ENCODE measurements at regions of chr22 and their contacts with region 1.

Region 1: GRCh38 chr22:37486224-37486845 is at the start of gene MFNG:
- DNase-seq: peak; percentile 26
- ATAC-seq: peak; percentile 79
- H3K4me3 ChIP-seq: peak within 1 kb of the TSS; percentile 94
- H3K27ac ChIP-seq: peak within 1 kb of the TSS; percentile 97
- H3K4me1 ChIP-seq: peaks cover 25% of the 10 kb centered on the region
- H3K27me3 ChIP-seq: no peaks in the 10 kb centered on the region
- CTCF ChIP-seq: no peak
- EP300 ChIP-seq: no peak
- POLR2A ChIP-seq: peak; percentile 78
- RAD21 ChIP-seq: no peak
- polyA plus RNA-seq, gene MFNG: 11.5 to 26.1 TPM

Region 2: DNA sequence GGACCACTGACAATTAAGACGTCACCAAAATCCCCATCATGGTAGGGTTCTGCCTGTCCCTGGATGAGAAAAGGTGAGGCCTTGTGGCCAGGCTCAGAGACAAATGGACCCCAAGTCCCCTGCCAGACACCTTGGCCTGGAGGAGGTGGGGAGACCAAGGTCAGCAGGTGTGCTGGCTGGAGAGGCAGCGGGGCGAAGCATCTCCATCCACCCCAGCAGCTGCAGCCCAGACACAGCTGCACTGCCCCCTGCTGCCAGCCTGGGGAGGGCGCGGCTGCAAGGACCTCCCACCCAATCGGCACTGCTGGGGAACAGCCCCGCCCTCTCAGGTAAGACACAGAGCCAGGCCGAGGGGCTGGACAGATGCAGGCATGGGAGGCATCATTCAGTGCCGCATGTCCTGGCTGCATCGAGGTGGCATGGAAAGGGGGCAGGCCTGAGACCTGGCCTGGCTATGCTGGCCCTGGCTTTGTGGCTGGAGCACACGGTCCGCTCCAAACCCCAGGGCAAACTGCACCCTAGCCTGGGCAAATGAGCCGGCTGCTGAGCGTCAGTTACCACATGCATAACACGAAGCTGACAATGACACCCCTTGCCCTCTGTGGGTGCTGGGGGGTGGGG is 12.1 kb after region 1 on chr22:
- CTCF ChIA-PET with region 1: interaction called, 22 read pairs
- POLR2A ChIA-PET with region 1: no interaction called
- RAD21 ChIA-PET with region 1: no interaction called
- SMC1A ChIA-PET with region 1: interaction called, 4 read pairs
- in situ Hi-C with region 1: no loop called
- intact Hi-C with region 1: no loop called
- DNase-seq: peak; percentile 15
- ATAC-seq: peak; percentile 97
- H3K4me3 ChIP-seq: no peak overlapping the region
- H3K27ac ChIP-seq: no peak overlapping the region
- H3K4me1 ChIP-seq: no peaks in the 10 kb centered on the region
- H3K27me3 ChIP-seq: peaks cover 0 to 3% of the 10 kb centered on the region in 2 experiments; a peak in 2 of 4 replicates
- CTCF ChIP-seq: peak; percentile 71 to 83 (median 71)
- EP300 ChIP-seq: no peak
- POLR2A ChIP-seq: no peak
- RAD21 ChIP-seq: peak; percentile 54

Region 3: DNA sequence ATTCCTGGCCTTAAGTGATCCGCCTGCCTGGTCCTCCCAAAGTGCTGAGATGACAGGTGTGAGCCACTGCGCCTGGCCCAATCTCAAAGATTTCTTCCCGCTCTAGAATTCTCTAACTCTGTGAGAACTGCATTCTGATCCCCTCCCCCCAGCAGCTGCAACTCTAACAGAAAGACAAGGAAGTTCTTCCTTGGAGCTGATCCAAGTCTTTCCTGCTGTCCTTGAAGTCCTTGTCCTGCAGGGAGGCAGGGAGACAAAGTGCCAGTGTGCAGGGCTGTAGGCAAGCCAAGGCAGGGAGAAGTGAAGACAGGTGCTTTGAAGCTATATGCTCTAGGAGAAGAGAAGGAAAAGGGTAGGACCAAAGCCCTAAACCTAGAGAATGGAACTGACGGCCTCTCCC is 112.8 kb after region 1 on chr22:
- CTCF ChIA-PET with region 1: no interaction called
- POLR2A ChIA-PET with region 1: no interaction called
- RAD21 ChIA-PET with region 1: no interaction called
- SMC1A ChIA-PET with region 1: no interaction called
- in situ Hi-C with region 1: no loop called
- intact Hi-C with region 1: no loop called
- DNase-seq: no peak
- ATAC-seq: no peak
- H3K4me3 ChIP-seq: no peak overlapping the region
- H3K27ac ChIP-seq: no peak overlapping the region
- H3K4me1 ChIP-seq: no peaks in the 10 kb centered on the region
- H3K27me3 ChIP-seq: 0 out of 4 replicates have a peak, but pooled peaks cover 0 to 1% of the 10 kb centered on the region in 2 experiments
- CTCF ChIP-seq: no peak
- EP300 ChIP-seq: no peak
- POLR2A ChIP-seq: no peak
- RAD21 ChIP-seq: no peak